Testis (tissue), 5 donors: ENCODE measurements at regions of chr5 and their contacts with region 1.

Region 1: DNA sequence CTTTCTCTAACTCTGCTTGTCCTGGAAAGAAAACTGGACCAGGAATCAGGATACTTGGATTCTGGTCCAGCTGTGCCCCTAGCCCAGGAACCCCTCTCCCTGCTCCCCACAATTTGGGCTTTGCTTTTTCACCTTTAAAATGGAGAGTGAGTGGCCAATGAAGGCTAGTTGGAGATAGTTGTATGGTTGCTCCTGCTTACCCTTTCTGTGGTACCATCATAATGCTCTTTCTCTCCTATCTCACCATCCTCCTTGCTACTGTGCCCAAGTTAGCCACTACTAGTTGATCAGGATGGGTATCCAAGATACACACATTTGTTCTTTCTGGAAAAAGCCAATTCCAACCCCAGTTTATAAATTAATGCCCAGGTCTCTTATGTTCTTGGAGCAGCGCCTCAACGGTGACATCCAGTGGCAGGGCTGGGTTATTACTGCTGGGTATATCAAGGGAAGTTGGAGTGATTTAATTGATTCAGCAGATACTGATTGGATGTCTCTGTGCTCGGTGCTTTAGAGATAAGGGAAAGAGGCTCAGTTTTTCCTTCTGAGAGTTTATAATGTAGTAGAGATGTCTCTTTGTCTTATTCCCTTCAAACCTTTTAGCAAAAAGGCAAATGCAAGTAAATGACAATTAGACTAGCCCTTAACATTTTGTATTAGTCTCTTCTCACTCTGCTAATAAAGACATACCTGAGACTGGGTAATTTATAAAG is 38.6 kb downstream of the FAXDC2 start:
- DNase-seq: peak; percentile 71
- H3K4me3 ChIP-seq: no peak overlapping the region
- H3K27ac ChIP-seq: peak overlapping the region in 1 of 2 donors; percentile 37
- H3K4me1 ChIP-seq: no peaks in the 10 kb centered on the region
- H3K27me3 ChIP-seq: no peaks in the 10 kb centered on the region
- CTCF ChIP-seq: peak; percentile 78 to 90 (median 88)
- POLR2A ChIP-seq: no peak

Region 2: DNA sequence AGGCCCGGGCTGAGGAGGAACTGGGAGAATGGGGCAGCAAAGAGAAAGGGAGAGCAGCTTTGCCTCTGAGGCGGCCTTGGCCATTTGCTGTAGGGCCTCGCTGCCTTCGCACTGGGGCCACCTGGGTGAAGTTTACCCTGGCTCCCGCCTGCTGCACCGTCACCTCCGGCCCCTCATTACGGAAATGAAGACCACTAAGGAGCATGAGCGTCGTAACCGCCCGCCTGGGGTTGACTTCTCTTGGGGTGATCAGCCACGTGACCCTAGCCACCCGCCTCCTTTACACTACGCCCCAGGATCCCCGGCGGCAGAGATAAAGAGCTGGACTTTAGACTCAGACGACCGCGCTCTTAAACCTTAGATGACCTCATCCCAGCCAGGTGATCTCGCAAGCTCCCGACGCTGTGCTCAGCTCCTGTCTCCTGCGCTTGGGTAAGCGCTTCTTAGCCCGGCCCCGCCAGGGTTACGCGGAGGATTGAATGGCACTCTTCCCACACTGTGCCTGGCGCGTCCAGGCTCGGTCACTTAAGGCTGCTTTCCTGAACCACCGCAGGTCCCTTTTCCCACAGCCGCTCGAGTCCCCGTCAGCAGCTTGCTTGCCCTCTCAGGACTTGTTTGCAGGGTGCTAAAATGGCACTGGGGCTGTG is 164.6 kb before region 1 on chr5:
- intact Hi-C with region 1: loop called (anchors 5 kb)
- DNase-seq: peak; percentile 51
- H3K4me3 ChIP-seq: peak overlapping the region; percentile 19 to 29
- H3K27ac ChIP-seq: no peak overlapping the region
- H3K4me1 ChIP-seq: peaks cover 6% of the 10 kb centered on the region
- H3K27me3 ChIP-seq: no peaks in the 10 kb centered on the region
- CTCF ChIP-seq: peak in 1 of 3 experiments; percentile 7
- POLR2A ChIP-seq: no peak

Region 3: DNA sequence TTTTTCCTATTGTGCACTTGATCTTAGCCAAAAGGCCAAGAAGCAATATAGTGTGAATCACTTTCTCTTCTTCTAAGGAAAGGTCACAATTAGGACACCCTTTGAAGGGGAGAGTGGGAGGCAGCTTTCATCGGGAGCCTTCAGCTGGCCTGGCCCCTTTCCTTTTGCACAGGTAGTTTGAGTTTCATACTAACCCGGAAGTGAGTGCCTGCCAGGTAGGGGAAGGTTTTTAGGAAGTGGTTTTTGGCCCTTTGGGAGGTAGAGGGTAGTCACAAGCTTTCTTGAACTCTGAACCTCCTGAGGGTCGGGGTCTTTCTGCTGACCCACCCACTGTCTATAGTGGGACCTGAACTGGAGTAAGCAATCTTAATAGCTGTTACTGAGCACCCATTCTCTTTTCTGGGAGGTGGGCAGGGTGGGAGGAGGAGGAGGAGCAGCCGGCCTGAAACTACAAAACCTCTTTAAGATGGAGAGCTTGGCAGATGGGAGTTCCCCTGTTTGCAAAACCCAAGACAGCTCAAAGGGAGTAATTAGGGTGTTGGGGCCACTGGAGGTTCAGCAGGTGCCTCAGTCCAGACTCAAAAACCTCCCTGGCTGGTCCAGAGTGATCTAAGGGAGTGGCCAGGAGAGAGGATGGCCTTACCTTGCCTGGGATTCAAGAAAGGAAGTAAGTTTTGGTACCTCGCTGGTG is 50.6 kb before region 1 on chr5:
- intact Hi-C with region 1: loop called (anchors 10 kb)
- DNase-seq: no peak
- H3K4me3 ChIP-seq: no peak overlapping the region
- H3K27ac ChIP-seq: no peak overlapping the region
- H3K4me1 ChIP-seq: peaks cover 40% of the 10 kb centered on the region
- H3K27me3 ChIP-seq: no peaks in the 10 kb centered on the region
- CTCF ChIP-seq: no peak
- POLR2A ChIP-seq: no peak